ENCODE measurements at regions of chr11 and their contacts with region 1.

Region 1: DNA sequence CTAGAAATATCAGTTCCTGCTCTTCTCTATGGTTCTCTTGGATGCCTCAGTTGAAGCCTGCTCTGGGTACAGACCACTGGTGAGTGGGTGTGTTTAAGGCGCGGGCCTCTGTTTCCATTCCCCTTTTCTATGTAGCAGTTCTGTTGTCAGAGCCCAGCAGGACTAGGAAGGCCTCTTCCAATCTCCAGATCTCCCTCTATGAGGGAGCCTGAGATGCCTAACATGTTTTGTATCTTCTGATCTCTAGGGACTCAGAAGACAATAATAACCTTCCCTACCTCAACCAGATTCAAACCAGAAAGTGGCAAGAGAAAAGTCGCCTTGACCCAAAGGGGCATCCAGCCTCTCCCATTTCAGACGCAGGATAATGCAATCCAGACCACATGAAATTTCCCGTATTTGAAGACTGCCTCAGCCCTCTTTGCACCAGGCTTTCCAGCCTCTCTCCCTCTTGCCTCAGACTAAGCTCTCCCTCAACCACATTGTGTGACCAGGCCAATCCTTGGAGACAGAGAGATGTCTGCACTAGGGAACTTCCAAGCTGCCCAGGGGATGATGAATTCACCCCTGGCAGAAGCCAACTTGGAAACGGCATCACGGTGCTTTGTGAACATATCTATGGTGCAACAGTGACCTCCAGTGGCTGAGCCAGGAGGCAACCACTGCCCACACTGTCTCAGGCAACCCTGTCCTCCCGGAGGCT is 150.1 kb upstream of the UBASH3B start:
- DNase-seq: peak; percentile 80
- ATAC-seq: peak; percentile 99

Region 2: GRCh38 chr11:121643535-121644512 is 861.6 kb before region 1 on chr11:
- intact Hi-C with region 1: loop called (anchors 5 kb)
- DNase-seq: no peak
- ATAC-seq: no peak

Region 3: DNA sequence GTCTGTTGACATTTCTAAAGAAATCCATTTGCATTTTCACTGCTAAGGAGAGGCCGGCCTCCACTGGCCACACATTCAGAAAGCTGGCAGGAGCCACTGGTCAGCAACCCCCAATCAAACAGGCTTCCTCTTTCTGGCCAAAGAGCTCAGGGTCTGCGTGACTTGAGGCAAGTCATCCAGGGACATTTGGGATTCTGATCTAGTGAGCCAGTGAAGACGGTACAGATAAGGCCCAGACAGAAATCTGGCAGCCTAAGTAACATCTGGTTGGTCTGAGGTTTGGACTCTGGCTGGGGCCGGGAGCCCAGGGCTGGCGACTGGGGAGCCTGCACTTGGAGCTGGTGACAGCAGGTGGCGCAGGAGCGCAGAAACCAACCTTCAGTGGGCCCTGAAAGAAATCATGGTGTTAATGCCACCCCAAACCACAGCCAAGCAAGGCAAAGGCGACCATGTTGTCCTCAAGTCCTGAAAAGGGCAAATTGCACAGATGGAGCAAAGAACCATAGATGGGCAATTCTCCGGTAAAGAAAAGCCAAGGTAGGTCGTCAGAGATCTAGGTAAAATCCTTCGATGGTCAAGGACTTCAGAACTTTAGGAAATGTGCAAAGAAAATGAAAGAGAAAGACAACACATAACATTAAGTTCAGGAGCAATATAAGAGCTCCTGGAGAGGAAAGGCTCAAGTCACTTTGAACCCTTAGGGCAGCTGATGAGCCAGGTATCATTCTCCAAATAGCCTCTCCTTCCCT is 290.0 kb before region 1 on chr11:
- intact Hi-C with region 1: loop called (anchors 5 kb)
- DNase-seq: peak; percentile 89
- ATAC-seq: peak; percentile 98

Region 4: DNA sequence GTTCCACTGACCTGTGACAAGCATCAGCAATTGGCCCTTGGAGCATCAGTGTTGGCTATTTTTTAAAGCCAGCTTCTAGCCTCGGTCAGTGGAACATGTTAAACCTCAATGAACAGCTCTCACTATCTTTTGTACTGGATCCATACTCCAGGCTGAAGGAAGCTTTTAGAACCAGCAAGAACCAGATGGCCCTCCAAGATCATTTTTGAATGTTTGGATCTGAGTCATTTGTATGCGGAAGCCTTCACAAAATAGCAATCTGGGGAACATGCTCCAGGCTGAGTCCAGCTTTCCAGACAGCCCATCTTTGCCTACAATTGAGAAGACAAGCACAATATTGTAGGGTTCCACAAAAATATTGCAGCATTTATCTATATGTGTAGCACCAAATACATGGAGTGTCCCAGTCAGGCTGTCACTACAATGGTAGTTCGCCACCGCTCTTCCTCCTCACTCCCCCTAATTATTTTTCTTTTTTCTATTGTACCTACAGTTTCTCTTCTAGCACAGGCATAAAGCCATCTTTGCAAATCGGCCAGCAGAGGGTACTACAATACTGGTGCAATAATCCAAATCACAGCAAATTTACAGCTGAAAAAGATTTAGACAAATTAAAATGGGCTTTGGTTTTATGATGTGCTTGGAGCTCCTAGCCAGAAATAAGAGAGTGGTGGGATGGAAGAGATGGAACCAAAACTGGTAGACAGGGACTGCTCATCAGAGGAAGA is 212.0 kb before region 1 on chr11:
- intact Hi-C with region 1: loop called (anchors 5 kb)
- DNase-seq: no peak
- ATAC-seq: peak; percentile 55

Region 5: GRCh38 chr11:122422707-122423106 is 82.7 kb before region 1 on chr11:
- intact Hi-C with region 1: no loop called
- DNase-seq: no peak
- ATAC-seq: no peak